HCT116 (cell line): ENCODE measurements at regions of chr9 and their contacts with region 1.

Region 1: GRCh38 chr9:101566904-101567724 is 27.7 kb downstream of the PPP3R2 start:
- DNase-seq: peak; percentile 22
- ATAC-seq: peak; percentile 82
- H3K4me3 ChIP-seq: no peak overlapping the region
- H3K27ac ChIP-seq: no peak overlapping the region
- H3K4me1 ChIP-seq: no peaks in the 10 kb centered on the region
- H3K27me3 ChIP-seq: no peaks in the 10 kb centered on the region
- CTCF ChIP-seq: peak; percentile 51 to 72 (median 64); a peak in 5 of 6 replicates
- POLR2A ChIP-seq: no peak
- RAD21 ChIP-seq: peak; percentile 47; the same call in 1 of the 2 replicates

Region 2: DNA sequence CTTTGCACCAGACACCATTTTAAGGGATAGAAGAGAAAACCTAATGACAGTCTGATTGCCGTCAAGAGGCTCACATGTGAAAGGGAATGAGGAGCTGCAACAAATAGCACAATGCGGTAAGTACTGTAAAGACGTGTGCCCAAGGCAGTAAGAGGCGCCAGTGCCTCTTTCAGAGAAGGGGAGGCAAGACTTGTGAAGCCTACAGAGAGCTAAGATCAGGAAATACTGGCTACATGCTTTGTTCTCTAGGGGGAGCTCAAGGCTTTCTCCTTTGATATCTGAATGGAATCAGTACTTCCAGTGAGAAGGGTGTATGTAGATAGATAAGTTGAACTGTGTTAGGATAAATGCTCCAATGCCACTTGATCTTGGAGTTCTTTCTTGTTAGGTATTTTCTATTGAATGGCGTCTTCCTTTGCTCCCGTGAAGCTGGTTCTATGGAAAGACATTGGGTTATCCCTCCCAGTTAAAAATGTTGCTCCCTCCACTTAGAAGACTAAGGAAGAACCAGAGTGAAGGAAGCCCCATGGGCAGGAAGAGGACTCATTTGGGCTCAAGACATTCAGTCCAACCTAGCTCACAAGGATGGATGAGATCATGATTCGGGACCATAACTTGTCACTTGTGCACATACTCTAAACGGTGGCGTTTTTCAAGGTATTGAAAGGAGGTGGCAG is 108.0 kb before region 1 on chr9:
- CTCF ChIA-PET with region 1: interaction called, 12 read pairs
- POLR2A ChIA-PET with region 1: no interaction called
- RAD21 ChIA-PET with region 1: interaction called in 1 of 2 experiments, 4 read pairs
- intact Hi-C with region 1: loop called (anchors 1 kb)
- DNase-seq: peak; percentile 79
- ATAC-seq: peak; percentile 97
- H3K4me3 ChIP-seq: no peak overlapping the region
- H3K27ac ChIP-seq: no peak overlapping the region
- H3K4me1 ChIP-seq: peaks cover 11 to 23% of the 10 kb centered on the region in 2 experiments; a peak in 3 of 4 replicates
- H3K27me3 ChIP-seq: no peaks in the 10 kb centered on the region
- CTCF ChIP-seq: peak; percentile 72 to 93 (median 79)
- POLR2A ChIP-seq: no peak
- RAD21 ChIP-seq: peak; percentile 85